Activated CD4-positive, alpha-beta T cell treated with anti-CD3 and anti-CD28 coated beads for 36 hours (primary cell): ENCODE measurements at regions of chr16 and their contacts with region 1.

Region 1: GRCh38 chr16:67816240-67817031 is 9.7 kb downstream of the TSNAXIP1 start:
- DNase-seq: peak; percentile 95
- ATAC-seq: peak; percentile 99
- H3K4me3 Mint-ChIP-seq: no peak overlapping the region
- H3K27ac Mint-ChIP-seq: peak overlapping the region; percentile 67
- H3K4me1 Mint-ChIP-seq: peaks cover 2% of the 10 kb centered on the region
- H3K27me3 Mint-ChIP-seq: no peaks in the 10 kb centered on the region

Region 2: DNA sequence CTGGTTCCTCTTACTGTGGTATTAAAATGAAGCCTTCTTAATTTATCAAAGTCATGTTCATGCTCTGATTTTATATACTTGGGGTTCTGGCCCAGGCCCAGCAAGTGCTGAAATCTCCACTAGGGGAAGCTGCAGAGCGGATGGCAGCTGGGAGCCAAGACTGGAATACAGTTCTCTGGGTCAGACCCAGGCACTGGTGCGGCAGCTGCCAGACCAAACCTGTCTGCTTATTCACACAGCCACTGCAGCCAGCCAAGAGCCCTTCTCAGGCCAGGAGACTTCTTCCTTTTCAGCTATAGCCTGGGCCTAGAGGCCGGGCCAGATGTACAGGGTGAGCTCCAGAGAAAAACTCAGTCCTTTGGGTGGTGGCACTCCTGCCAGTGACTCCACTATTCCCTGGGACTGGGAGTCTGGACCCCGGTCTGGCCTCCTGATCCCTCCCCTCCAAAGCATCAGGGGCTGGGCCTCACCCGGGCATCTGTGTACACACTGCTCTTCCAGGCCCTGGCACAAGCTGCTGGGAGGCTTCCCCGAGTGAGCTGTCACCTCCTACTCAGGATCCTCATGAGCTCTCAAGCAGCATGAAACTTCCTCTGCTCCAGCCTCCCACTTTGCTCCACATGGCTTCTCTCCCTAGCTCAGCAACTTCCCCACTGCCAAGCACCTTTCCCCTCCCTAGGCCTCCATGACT is 359.9 kb before region 1 on chr16:
- CTCF ChIA-PET with region 1: no interaction called
- POLR2A ChIA-PET with region 1: no interaction called
- intact Hi-C with region 1: no loop called
- DNase-seq: peak; percentile 17
- ATAC-seq: no peak
- H3K4me3 Mint-ChIP-seq: no peak overlapping the region
- H3K27ac Mint-ChIP-seq: no peak overlapping the region
- H3K4me1 Mint-ChIP-seq: peaks cover 8% of the 10 kb centered on the region
- H3K27me3 Mint-ChIP-seq: no peaks in the 10 kb centered on the region

Region 3: GRCh38 chr16:67760206-67760955 is 56.1 kb before region 1 on chr16:
- CTCF ChIA-PET with region 1: interaction called, 12 read pairs
- POLR2A ChIA-PET with region 1: no interaction called
- intact Hi-C with region 1: no loop called
- DNase-seq: no peak
- ATAC-seq: peak; percentile 12
- H3K4me3 Mint-ChIP-seq: no peak overlapping the region
- H3K27ac Mint-ChIP-seq: peak overlapping the region; percentile 51
- H3K4me1 Mint-ChIP-seq: peaks cover 12% of the 10 kb centered on the region
- H3K27me3 Mint-ChIP-seq: no peaks in the 10 kb centered on the region

Region 4: GRCh38 chr16:67833418-67834241 is 17.2 kb after region 1 on chr16:
- CTCF ChIA-PET with region 1: interaction called, 37 read pairs
- POLR2A ChIA-PET with region 1: no interaction called
- intact Hi-C with region 1: loop called in 1 of 2 experiments (anchors 1 kb)
- DNase-seq: peak; percentile 97
- ATAC-seq: peak; percentile 100
- H3K4me3 Mint-ChIP-seq: peak overlapping the region; percentile 87
- H3K27ac Mint-ChIP-seq: peak overlapping the region; percentile 78
- H3K4me1 Mint-ChIP-seq: peaks cover 9% of the 10 kb centered on the region
- H3K27me3 Mint-ChIP-seq: no peaks in the 10 kb centered on the region

Region 5: DNA sequence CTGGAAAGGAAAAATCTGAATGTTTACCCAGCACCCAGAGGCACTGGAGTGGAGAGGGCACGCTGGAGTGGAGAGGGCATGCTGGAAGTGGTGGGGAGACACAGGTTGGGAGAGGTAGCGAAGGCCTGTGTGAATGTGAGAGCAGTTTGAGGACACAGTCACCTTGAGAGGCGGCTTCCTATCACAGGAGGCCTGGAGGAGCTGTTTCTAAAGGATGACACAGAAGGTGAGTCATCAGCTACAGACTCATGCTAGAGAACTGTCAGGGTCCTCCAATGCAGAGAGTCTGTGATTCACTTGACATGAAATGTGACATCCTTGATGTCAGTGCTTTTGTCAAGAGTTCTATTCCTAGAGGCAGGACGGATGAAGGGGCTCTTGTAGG is 101.4 kb after region 1 on chr16:
- CTCF ChIA-PET with region 1: interaction called, 13 read pairs
- POLR2A ChIA-PET with region 1: no interaction called
- intact Hi-C with region 1: no loop called
- DNase-seq: peak; percentile 79
- ATAC-seq: peak; percentile 100
- H3K4me3 Mint-ChIP-seq: no peak overlapping the region
- H3K27ac Mint-ChIP-seq: peak overlapping the region; percentile 91
- H3K4me1 Mint-ChIP-seq: peaks cover 34% of the 10 kb centered on the region
- H3K27me3 Mint-ChIP-seq: no peaks in the 10 kb centered on the region

Region 6: GRCh38 chr16:68040507-68041288 is 224.3 kb after region 1 on chr16:
- CTCF ChIA-PET with region 1: interaction called, 4 read pairs
- POLR2A ChIA-PET with region 1: no interaction called
- intact Hi-C with region 1: loop called (anchors 1 kb)
- DNase-seq: peak; percentile 94
- ATAC-seq: peak; percentile 98
- H3K4me3 Mint-ChIP-seq: no peak overlapping the region
- H3K27ac Mint-ChIP-seq: peak overlapping the region; percentile 31
- H3K4me1 Mint-ChIP-seq: peaks cover 7% of the 10 kb centered on the region
- H3K27me3 Mint-ChIP-seq: no peaks in the 10 kb centered on the region